Naive thymus-derived CD4-positive, alpha-beta T cell (primary cell): ENCODE measurements at regions of chr1 and their contacts with region 1.

Region 1: DNA sequence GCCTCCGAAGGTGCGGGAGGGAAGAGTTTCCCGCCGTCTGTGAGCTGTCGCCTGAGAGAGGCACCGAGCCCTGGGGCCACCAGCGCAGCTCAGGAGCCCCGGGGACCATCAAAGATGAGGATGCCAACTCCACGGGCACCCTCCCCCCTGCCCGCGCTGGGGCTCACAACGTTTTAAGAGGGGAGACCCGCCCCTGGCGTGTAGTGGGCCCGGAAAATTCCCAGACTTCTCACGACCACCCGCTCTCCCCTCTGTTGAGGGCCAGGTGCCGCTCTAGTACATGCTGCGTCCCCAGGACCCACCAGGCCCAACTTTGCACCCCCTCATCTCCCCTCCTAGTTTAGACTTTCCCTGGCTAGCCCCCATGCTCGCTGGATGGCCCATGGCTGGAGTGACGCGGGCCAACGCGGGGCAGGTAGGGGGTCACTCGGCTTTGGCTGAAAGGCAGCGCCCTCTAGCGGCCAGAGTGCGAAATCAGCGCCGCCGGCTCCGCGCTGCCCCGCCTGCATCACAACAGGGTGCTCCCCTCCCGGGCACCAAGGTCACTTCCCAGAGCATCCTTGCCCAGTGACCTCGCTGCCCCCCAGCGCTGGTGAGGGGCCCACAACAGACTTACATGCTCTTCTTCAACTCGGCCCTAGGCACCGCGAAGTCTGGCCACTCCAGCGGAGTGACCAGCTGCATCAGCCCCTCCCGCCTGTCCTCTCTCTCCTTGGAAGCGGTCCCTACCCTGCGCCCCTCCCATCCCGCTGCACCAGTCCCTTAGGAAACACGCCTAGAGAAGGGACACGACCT is 1.8 kb downstream of the CD160 start:
- DNase-seq: peak; percentile 25 to 77 (median 58)
- ATAC-seq: peak; percentile 93
- H3K4me3 ChIP-seq: peak overlapping the region; percentile 60
- H3K4me3 Mint-ChIP-seq: peak overlapping the region; percentile 38 to 83 (median 76)
- H3K27ac ChIP-seq: no peak overlapping the region
- H3K27ac Mint-ChIP-seq: peak overlapping the region in 3 of 9 donors; percentile 3 to 51 (median 18)
- H3K4me1 ChIP-seq: peaks cover 4 to 18% of the 10 kb centered on the region in 2 donors
- H3K4me1 Mint-ChIP-seq: peaks cover 3 to 27% (median 9%) of the 10 kb centered on the region in 7 donors
- H3K27me3 ChIP-seq: no peaks in the 10 kb centered on the region
- H3K27me3 Mint-ChIP-seq: peaks cover 15 to 31% (median 27%) of the 10 kb centered on the region in 5 donors

Region 2: DNA sequence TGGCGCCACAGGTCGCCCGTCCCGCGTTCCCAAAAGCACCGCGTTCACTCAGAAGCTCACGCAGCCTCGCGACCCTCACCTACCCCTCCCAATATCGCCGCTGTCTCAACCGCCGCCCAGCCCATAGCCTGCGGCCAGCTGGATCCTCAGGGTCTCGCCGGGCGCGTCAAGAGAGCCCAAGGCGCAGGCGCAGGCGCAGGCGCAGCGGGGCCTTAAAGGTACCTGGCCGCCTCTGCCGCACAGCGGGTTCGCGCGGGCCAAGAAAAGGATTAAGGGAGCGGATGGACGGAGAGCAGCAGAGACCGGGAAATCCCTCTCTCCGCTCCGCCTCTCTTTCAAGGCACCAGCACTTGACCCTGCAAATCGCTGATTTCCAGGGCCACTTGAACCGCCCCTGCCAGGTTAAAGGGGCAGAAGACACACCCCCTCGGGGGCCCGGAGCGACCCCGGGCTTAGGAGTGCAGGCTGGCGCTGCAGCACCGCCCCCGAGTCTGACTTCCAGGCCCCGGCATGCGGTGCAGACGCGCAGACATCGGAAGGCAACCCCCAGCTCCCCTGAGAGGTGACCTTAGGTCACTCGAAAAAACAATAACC is 295.5 kb before region 1 on chr1 and contains the start of gene NBPF20:
- CTCF ChIA-PET with region 1: no interaction called
- POLR2A ChIA-PET with region 1: no interaction called
- intact Hi-C with region 1: no loop called
- DNase-seq: peak; percentile 66 to 83 (median 79)
- ATAC-seq: peak; percentile 93
- H3K4me3 ChIP-seq: peak within 1 kb of the TSS; percentile 80
- H3K4me3 Mint-ChIP-seq: peak within 1 kb of the TSS; percentile 90 to 99 (median 96)
- H3K27ac ChIP-seq: peak within 1 kb of the TSS; percentile 61
- H3K27ac Mint-ChIP-seq: peak within 1 kb of the TSS; percentile 46 to 95 (median 88)
- H3K4me1 ChIP-seq: no peaks in the 10 kb centered on the region
- H3K4me1 Mint-ChIP-seq: peaks cover 6 to 12% (median 9%) of the 10 kb centered on the region in 7 donors
- H3K27me3 ChIP-seq: no peaks in the 10 kb centered on the region
- H3K27me3 Mint-ChIP-seq: peaks cover 35 to 46% (median 36%) of the 10 kb centered on the region in 5 donors
- total RNA-seq, gene NBPF20: 0.94 to 6.0 (median 4.8) TPM

Region 3: GRCh38 chr1:145601593-145601992 is 119.5 kb before region 1 on chr1:
- CTCF ChIA-PET with region 1: no interaction called
- POLR2A ChIA-PET with region 1: no interaction called
- intact Hi-C with region 1: loop called in 1 of 2 experiments (anchors 10 kb)
- DNase-seq: no peak
- ATAC-seq: no peak
- H3K4me3 ChIP-seq: no peak overlapping the region
- H3K4me3 Mint-ChIP-seq: no peak overlapping the region
- H3K27ac ChIP-seq: no peak overlapping the region
- H3K27ac Mint-ChIP-seq: no peak overlapping the region
- H3K4me1 ChIP-seq: no peaks in the 10 kb centered on the region
- H3K4me1 Mint-ChIP-seq: peaks cover 0 to 3% (median 0%) of the 10 kb centered on the region in 7 donors
- H3K27me3 ChIP-seq: no peaks in the 10 kb centered on the region
- H3K27me3 Mint-ChIP-seq: peaks cover 4 to 25% (median 9%) of the 10 kb centered on the region in 5 donors